Dorsolateral prefrontal cortex (tissue), 120 donors: ENCODE measurements at regions of chr21 and their contacts with region 1.

Region 1: DNA sequence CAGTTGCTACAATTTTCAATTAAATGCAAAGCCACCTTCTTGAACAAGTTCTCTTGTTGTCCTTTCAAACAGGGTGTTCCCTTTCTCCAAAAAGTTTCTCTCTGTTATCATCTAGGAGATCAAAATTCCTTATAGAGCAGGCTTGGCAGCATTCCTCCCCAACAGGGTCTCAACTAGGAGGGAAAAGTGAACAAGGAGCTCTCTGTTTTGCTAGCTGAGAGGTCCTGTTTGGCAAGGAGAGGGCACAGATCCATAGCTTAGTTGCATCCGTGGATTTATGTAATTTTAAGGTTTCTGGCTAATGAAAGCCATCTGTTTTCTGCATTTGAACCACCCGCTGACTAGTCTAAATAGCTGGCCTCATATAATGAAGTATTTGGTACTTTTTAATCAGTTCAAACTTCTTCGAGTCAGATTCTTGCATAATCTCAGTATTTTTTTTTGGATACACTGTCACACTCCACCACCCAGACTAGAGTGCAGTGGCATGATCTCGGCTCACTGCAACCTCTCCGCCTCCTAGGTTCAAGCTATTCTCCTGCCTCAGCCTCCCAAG is 54.0 kb downstream of the APP start:
- DNase-seq: no peak
- H3K4me3 ChIP-seq: peak overlapping the region in 34 of 59 donors; percentile 0 to 50 (median 23)
- H3K27ac ChIP-seq: peak overlapping the region; percentile 52 to 99 (median 94)
- H3K27me3 ChIP-seq: no peaks in the 10 kb centered on the region
- CTCF ChIP-seq: no peak

Region 2: DNA sequence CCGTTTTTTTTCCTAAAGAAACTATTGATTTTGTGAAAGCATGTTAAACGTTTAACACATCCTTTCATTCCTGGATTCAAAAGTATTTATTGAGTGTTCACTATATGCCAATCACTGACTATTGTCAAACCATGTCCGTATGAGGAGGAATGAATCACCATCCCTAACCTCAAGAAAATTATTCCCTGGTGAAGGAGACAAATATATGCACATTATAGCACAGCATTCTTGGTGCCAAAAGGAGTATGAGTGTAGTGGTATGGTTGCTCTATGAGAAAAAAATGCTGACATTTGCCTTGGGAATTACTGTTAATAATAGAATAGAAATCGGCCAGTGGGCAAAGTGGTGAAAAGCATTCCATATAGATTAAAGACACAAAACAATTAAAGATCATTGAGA is 1899.4 kb before region 1 on chr21:
- intact Hi-C with region 1: no loop called
- DNase-seq: no peak
- H3K4me3 ChIP-seq: no peak overlapping the region
- H3K27ac ChIP-seq: no peak overlapping the region
- H3K27me3 ChIP-seq: no peaks in the 10 kb centered on the region
- CTCF ChIP-seq: no peak

Region 3: GRCh38 chr21:25997788-25998611 is 118.5 kb before region 1 on chr21:
- intact Hi-C with region 1: loop called in 1 of 2 experiments (anchors 10 kb)
- DNase-seq: peak in 3 of 10 donors; percentile 12 to 56 (median 34)
- H3K4me3 ChIP-seq: peak overlapping the region in 3 of 59 donors; percentile 11 to 21 (median 20)
- H3K27ac ChIP-seq: peak overlapping the region; percentile 76 to 98 (median 95)
- H3K27me3 ChIP-seq: no peaks in the 10 kb centered on the region
- CTCF ChIP-seq: peak in 4 of 56 donors; percentile 13 to 18 (median 16)

Region 4: GRCh38 chr21:26032263-26032662 is 84.3 kb before region 1 on chr21:
- intact Hi-C with region 1: loop called in 1 of 2 experiments (anchors 10 kb)
- DNase-seq: no peak
- H3K4me3 ChIP-seq: no peak overlapping the region
- H3K27ac ChIP-seq: peak overlapping the region in 19 of 59 donors; percentile 3 to 78 (median 40)
- H3K27me3 ChIP-seq: no peaks in the 10 kb centered on the region
- CTCF ChIP-seq: peak in 11 of 56 donors; percentile 6 to 25 (median 12)

Region 5: DNA sequence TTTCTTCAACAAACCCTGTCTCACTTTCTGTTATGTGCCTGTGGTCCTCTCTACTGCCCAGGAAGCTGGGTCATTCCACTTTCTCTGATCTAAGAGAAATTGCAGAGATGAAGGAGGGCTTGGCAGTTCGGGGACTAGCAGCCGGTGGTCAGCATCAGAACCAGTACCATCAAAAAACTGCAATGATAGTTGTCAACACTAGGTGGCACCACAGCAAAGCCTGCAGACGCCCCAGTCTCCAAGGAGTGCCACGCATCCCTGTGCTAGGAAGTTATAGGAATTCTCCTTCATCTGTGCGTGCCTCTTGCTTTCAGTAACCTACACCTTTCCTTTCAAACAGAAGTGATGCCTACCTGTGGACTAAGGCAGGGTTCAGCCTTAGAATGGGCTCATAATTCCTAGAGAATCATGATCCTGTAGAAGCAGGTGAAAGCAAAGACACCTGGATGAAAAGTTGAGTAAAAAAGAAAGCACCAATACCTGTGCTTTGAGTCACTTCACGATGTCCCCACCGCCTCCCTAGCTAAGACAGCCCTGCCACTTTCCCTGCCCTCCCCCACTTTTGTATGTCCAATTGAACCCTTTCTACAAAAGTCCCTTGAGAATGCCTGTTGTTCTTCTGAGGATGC is 599.5 kb after region 1 on chr21:
- intact Hi-C with region 1: loop called in 1 of 2 experiments (anchors 10 kb)
- DNase-seq: peak in 8 of 10 donors; percentile 44 to 66 (median 52)
- H3K4me3 ChIP-seq: peak overlapping the region in 1 of 59 donors; percentile 8
- H3K27ac ChIP-seq: peak overlapping the region in 2 of 59 donors; percentile 9 to 21
- H3K27me3 ChIP-seq: no peaks in the 10 kb centered on the region
- CTCF ChIP-seq: peak; percentile 64 to 92 (median 84)